ENCODE measurements at regions of chr3 and their contacts with region 1.

Region 1: GRCh38 chr3:81218023-81218422 is 543.4 kb downstream of the GBE1 start:
- DNase-seq: peak; percentile 41
- H3K4me3 ChIP-seq: no peak overlapping the region
- H3K27ac ChIP-seq: no peak overlapping the region
- H3K4me1 ChIP-seq: peaks cover 11% of the 10 kb centered on the region
- H3K27me3 ChIP-seq: no peaks in the 10 kb centered on the region
- CTCF ChIP-seq: peak in 1 of 2 donors; percentile 26
- POLR2A ChIP-seq: no peak

Region 2: DNA sequence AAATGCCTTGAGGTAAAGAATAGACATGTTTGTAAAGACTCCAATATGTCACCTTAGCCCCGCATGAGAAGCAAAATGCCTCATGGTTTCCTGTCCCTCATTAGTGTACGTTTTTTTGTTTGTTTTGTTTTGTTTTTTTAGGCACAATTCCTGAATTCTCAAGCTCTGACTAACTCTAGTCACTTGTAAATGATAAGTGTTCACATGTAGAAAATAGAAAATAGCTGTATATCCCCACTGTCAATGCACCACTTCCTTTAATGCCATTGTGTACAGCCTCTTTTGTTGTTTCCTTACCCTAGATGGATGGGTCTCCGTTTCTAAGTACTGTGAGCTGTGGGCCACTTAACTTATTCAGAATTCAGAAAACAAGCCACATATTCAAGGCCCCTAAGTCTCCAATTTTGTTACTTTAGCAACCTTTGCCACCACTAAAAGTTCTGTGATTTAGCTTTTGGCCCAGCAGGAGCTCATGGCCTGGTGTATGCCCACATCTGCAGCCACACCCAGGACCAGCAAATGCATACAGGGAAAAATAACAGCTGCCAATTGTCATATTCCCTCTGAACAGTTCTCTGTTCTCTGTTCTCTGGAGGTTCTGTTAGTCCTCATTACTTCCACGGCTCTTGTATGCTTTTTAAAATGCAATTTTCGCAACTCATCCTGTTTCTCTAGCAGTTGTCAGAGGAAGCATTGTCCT is 112.1 kb before region 1 on chr3:
- CTCF ChIA-PET with region 1: no interaction called
- POLR2A ChIA-PET with region 1: no interaction called
- dilution Hi-C with region 1: no loop called
- intact Hi-C with region 1: loop called (anchors 5 kb)
- DNase-seq: peak; percentile 94
- H3K4me3 ChIP-seq: no peak overlapping the region
- H3K27ac ChIP-seq: peak overlapping the region; percentile 93
- H3K4me1 ChIP-seq: peaks cover 20% of the 10 kb centered on the region
- H3K27me3 ChIP-seq: no peaks in the 10 kb centered on the region
- CTCF ChIP-seq: no peak
- POLR2A ChIP-seq: no peak